ENCODE measurements at regions of chr2 and their contacts with region 1.

Region 1: GRCh38 chr2:45585267-45585861 is 25.7 kb downstream of the SRBD1 start:
- DNase-seq: no peak
- ATAC-seq: peak; percentile 86
- H3K4me3 ChIP-seq: no peak overlapping the region
- H3K27ac ChIP-seq: no peak overlapping the region
- H3K4me1 ChIP-seq: no peaks in the 10 kb centered on the region
- H3K27me3 ChIP-seq: no peaks in the 10 kb centered on the region
- CTCF ChIP-seq: peak; percentile 50 to 69 (median 66)
- EP300 ChIP-seq: no peak
- POLR2A ChIP-seq: no peak
- RAD21 ChIP-seq: peak; percentile 56

Region 2: GRCh38 chr2:45595721-45596435 is 10.5 kb after region 1 on chr2:
- CTCF ChIA-PET with region 1: interaction called, 23 read pairs
- POLR2A ChIA-PET with region 1: interaction called, 5 read pairs
- RAD21 ChIA-PET with region 1: interaction called, 3 read pairs
- SMC1A ChIA-PET with region 1: interaction called, 6 read pairs
- in situ Hi-C with region 1: no loop called
- intact Hi-C with region 1: no loop called
- DNase-seq: no peak
- ATAC-seq: no peak
- H3K4me3 ChIP-seq: no peak overlapping the region
- H3K27ac ChIP-seq: no peak overlapping the region
- H3K4me1 ChIP-seq: no peaks in the 10 kb centered on the region
- H3K27me3 ChIP-seq: no peaks in the 10 kb centered on the region
- CTCF ChIP-seq: no peak
- EP300 ChIP-seq: no peak
- POLR2A ChIP-seq: no peak
- RAD21 ChIP-seq: no peak

Region 3: GRCh38 chr2:45607701-45608100 is 22.3 kb after region 1 on chr2:
- CTCF ChIA-PET with region 1: interaction called, 15 read pairs
- POLR2A ChIA-PET with region 1: no interaction called
- RAD21 ChIA-PET with region 1: interaction called, 4 read pairs
- SMC1A ChIA-PET with region 1: interaction called, 10 read pairs
- in situ Hi-C with region 1: no loop called
- intact Hi-C with region 1: no loop called
- DNase-seq: no peak
- ATAC-seq: no peak
- H3K4me3 ChIP-seq: no peak overlapping the region
- H3K27ac ChIP-seq: no peak overlapping the region
- H3K4me1 ChIP-seq: peaks cover 6% of the 10 kb centered on the region; the same call in 1 of the 2 replicates
- H3K27me3 ChIP-seq: no peaks in the 10 kb centered on the region
- CTCF ChIP-seq: peak in 2 of 3 experiments; percentile 24 to 25; a peak in 2 of 6 replicates
- EP300 ChIP-seq: no peak
- POLR2A ChIP-seq: no peak
- RAD21 ChIP-seq: no peak

Region 4: DNA sequence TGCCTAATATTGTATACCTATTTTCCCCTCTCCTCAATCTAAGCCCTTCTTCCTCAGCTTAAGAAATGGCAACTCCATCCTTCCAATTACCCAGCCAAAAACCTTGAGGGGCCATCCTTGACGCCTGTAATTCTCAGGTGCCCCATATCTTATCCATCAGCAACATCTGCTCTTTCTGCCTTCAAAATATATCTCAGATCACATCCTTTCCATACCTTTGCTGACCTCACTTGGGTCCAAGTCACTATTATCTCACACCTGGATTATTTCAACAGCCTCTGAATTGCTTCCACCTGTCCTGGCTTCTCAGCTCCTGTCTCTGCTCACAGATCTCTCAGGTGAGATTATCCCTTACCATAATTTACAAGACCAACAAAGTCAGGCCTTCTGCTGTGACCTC is 73.8 kb after region 1 on chr2:
- CTCF ChIA-PET with region 1: no interaction called
- POLR2A ChIA-PET with region 1: no interaction called
- RAD21 ChIA-PET with region 1: no interaction called
- SMC1A ChIA-PET with region 1: no interaction called
- in situ Hi-C with region 1: no loop called
- intact Hi-C with region 1: no loop called
- DNase-seq: no peak
- ATAC-seq: no peak
- H3K4me3 ChIP-seq: no peak overlapping the region
- H3K27ac ChIP-seq: no peak overlapping the region
- H3K4me1 ChIP-seq: no peaks in the 10 kb centered on the region
- H3K27me3 ChIP-seq: no peaks in the 10 kb centered on the region
- CTCF ChIP-seq: no peak
- EP300 ChIP-seq: no peak
- POLR2A ChIP-seq: no peak
- RAD21 ChIP-seq: no peak